ENCODE measurements at regions of chr6 and their contacts with region 1.

Region 1: DNA sequence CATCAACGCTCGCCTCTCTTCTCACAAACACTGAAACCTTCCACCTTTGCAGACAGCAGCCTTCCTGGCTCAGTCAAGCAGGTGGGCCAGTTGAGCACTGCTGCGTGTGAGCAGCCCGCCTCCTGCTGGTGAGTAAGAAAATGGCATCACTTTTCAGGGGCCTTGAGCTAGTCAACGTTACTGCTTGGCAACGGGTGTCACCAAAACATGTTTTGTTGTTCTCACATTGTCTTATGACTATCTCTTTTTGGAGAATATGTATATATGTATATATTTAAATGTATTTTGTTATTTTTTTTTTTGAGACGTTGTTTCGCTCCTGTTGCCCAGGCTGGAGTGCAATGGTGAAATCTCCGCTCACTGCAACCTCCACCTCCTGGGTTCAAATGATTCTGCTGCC is 97.0 kb upstream of the AGPAT4 start:
- DNase-seq: peak; percentile 73
- H3K4me3 Mint-ChIP-seq: no peak overlapping the region
- H3K27ac Mint-ChIP-seq: no peak overlapping the region
- H3K4me1 Mint-ChIP-seq: no peaks in the 10 kb centered on the region
- H3K27me3 Mint-ChIP-seq: no peaks in the 10 kb centered on the region

Region 2: DNA sequence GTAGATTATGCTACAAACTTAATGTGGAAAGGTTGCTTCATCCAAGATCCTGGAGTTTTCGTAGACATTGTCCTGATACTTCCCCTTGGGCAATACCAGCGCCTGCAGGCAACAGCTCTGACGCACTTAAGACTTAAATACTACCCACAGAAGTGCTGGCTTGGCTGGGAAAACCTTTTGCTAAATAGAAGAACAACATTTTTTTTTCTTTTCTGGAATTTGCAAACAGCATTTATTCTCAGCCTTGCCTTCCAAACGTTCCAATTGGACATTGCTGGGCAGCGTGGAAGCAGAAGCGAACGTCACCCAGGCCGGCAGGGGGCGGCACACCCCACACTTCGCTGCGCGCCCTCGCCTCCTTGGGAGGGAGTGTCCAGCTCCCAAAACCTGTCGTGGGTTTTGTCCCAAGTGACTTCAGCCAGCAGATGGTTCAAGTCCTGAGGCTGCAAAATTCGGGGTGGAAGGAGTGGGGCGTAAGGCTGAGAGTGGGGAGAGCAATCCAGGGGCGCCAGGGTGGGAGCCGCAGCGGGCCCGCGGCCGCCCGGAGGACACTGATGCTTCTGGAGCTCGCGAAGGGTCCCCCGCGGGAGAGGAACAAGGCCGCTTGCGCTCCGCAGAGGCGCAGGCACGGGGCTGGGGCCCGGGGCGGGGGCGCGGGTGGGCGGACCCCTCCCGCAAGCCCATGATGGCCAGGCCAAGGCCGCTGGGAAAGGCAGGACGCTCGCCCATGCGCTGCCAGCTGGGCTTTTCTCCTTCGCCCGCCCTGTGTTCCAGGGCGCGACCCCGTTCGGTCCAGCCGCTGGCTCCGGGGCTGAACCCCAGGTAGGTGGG is 440.1 kb before region 1 on chr6:
- CTCF ChIA-PET with region 1: interaction called, 266 read pairs
- DNase-seq: peak; percentile 62
- H3K4me3 Mint-ChIP-seq: no peak overlapping the region
- H3K27ac Mint-ChIP-seq: no peak overlapping the region
- H3K4me1 Mint-ChIP-seq: peaks cover 2% of the 10 kb centered on the region
- H3K27me3 Mint-ChIP-seq: peaks cover 39% of the 10 kb centered on the region

Region 3: GRCh38 chr6:161101517-161101916 is 269.4 kb before region 1 on chr6:
- CTCF ChIA-PET with region 1: interaction called, 11 read pairs
- DNase-seq: no peak
- H3K4me3 Mint-ChIP-seq: no peak overlapping the region
- H3K27ac Mint-ChIP-seq: no peak overlapping the region
- H3K4me1 Mint-ChIP-seq: no peaks in the 10 kb centered on the region
- H3K27me3 Mint-ChIP-seq: no peaks in the 10 kb centered on the region

Region 4: GRCh38 chr6:161152907-161153662 is 217.8 kb before region 1 on chr6:
- CTCF ChIA-PET with region 1: interaction called, 17 read pairs
- DNase-seq: no peak
- H3K4me3 Mint-ChIP-seq: no peak overlapping the region
- H3K27ac Mint-ChIP-seq: no peak overlapping the region
- H3K4me1 Mint-ChIP-seq: no peaks in the 10 kb centered on the region
- H3K27me3 Mint-ChIP-seq: no peaks in the 10 kb centered on the region

Region 5: DNA sequence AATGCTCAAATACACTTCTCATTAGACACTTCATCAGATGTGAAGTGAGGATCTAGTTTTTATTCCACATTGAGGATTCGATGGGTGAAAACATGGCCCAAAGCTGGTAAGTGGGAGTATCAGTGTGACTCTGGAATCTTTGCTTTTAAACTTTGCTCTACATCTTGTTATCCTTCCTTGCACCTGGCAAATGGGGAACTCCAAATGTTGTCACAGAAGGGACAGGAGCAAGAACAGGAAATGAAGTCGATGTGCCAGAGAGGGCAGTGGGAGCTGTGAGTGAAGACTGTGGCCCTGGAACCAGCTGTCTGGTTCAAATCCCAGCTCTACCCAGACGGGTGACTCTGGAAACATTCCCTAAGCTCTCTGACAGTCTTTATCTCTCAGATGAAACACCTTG is 10.4 kb before region 1 on chr6:
- CTCF ChIA-PET with region 1: interaction called, 11 read pairs
- DNase-seq: no peak
- H3K4me3 Mint-ChIP-seq: no peak overlapping the region
- H3K27ac Mint-ChIP-seq: no peak overlapping the region
- H3K4me1 Mint-ChIP-seq: peaks cover 5% of the 10 kb centered on the region
- H3K27me3 Mint-ChIP-seq: no peaks in the 10 kb centered on the region

Region 6: DNA sequence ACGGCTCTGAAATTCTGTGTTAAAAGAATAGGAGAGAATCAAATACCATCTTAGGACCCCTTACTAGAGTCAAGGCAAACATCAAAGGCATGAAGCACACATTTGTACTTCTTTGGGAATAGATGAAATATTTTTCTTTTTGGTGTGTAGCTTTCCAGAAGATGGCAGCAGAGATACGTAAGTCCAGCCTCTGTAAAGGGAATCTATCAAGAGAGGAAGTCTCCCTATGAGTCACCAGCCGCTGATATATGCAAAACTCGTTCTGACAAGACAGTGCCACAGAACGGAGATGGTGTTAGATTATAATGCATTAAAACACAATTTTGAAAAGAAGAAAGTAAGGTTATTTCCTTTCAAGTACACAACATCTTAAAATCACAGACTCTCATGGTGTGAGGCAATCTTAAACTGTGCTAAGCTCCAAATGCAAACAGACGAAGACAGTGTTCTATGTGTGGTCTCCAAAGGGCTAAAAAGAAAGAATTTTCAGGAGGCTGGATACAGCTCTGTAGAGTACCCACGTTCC is 23.0 kb after region 1 on chr6:
- CTCF ChIA-PET with region 1: interaction called, 17 read pairs
- DNase-seq: peak; percentile 67
- H3K4me3 Mint-ChIP-seq: no peak overlapping the region
- H3K27ac Mint-ChIP-seq: no peak overlapping the region
- H3K4me1 Mint-ChIP-seq: no peaks in the 10 kb centered on the region
- H3K27me3 Mint-ChIP-seq: peaks cover 9% of the 10 kb centered on the region

Measured in activated naive CD4-positive, alpha-beta T cell treated with anti-CD3 and anti-CD28 coated beads, Interleukin-2, amount 10 ng/mL, durations not matched to agents 7 days and 5 days (primary cell).